Activated CD4-positive, alpha-beta T cell treated with anti-CD3 and anti-CD28 coated beads, Interleukin-2, amount 10 ng/mL, durations not matched to agents 24 days and 14 days (primary cell): ENCODE measurements at regions of chr1 and their contacts with region 1.

Region 1: GRCh38 chr1:108643492-108644335 is 17.2 kb downstream of the HENMT1 start:
- DNase-seq: peak; percentile 86
- H3K4me3 Mint-ChIP-seq: peak overlapping the region; percentile 6
- H3K27ac Mint-ChIP-seq: peak overlapping the region; percentile 69
- H3K4me1 Mint-ChIP-seq: peaks cover 62% of the 10 kb centered on the region
- H3K27me3 Mint-ChIP-seq: no peaks in the 10 kb centered on the region

Region 2: DNA sequence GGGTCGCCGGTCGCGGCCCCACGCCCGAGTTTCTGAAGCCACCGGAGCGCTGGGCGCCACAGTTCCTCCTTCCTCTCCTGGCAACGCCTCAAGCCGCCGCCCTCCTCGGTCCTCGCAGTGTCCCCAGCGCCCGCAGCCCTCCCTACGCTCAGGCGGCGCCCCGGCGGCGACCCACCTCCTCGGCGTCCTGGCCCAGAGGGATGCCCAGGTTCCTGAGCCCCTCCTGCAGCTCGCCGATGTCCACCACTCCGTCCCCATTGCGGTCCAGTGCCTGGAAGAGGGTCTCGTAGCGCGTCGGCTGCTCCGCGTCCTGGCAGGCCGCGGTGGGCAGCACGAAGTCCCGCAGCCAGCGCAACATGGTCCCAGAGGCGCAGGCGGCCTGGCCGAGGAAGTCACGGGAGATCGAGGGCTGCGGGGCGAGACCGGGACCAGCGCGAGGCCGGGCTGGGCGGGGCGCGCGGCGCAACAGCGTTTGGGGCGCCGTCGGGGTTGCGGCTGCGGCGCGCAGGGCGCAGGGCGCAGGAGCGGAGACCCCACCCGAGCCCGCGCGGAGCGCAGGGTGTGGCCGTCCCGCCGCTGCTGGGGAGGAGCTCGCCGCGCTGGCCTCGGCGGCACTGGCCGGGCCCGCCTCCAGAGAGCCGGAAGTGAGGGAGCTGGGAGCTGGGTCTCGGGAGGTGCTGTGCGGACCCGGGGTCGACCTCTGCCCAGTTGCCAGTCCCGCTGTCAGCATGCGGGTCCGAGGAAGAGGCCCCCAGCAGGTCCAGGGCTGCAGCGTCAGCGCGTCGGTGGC is 443.7 kb before region 1 on chr1 and contains the start of gene SLC25A24:
- intact Hi-C with region 1: loop called (anchors 5 kb)
- DNase-seq: peak; percentile 96
- H3K4me3 Mint-ChIP-seq: peak within 1 kb of the TSS; percentile 90
- H3K27ac Mint-ChIP-seq: peak within 1 kb of the TSS; percentile 83
- H3K4me1 Mint-ChIP-seq: peaks cover 27% of the 10 kb centered on the region
- H3K27me3 Mint-ChIP-seq: peaks cover 13% of the 10 kb centered on the region
- total RNA-seq, gene SLC25A24: 16.9 and 18.4 TPM in 2 replicates

Region 3: DNA sequence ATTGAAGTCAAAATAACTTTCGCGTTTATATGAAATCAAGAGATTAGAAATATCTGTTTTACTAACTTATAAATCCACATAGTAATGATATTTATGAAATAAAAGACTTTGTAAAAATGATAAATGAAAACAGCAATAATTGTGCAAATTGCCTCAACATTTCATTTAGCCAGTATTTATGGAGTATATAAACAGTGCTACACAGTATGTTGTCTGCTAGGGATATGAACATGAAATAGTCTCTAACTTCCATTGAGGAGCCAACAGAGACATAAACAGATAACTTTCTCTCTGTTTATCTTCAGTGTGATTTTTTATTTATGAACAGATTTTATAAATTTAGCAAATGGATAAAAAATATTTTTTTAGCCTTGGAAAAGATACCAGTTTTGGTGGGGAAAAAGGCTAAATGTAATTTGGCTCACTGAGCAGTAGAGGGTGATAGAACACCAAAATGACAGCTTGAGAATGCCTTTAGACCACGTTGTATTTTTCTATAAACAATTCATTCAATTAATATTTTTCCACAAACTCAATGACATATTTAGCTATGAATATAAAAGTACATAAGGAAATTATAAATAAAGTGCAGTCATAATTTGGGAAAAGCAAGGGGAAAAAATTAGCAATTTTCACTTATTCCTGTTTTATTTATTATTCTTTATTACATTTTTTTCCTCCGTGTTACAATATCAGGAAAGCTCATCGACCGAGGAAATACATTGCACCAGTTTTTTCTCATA is 131.3 kb before region 1 on chr1:
- intact Hi-C with region 1: loop called (anchors 1 kb)
- DNase-seq: no peak
- H3K4me3 Mint-ChIP-seq: no peak overlapping the region
- H3K27ac Mint-ChIP-seq: no peak overlapping the region
- H3K4me1 Mint-ChIP-seq: no peaks in the 10 kb centered on the region
- H3K27me3 Mint-ChIP-seq: peaks cover 55% of the 10 kb centered on the region

Region 4: GRCh38 chr1:108570128-108570527 is 73.6 kb before region 1 on chr1:
- intact Hi-C with region 1: loop called (anchors 2 kb)
- DNase-seq: peak; percentile 73
- H3K4me3 Mint-ChIP-seq: no peak overlapping the region
- H3K27ac Mint-ChIP-seq: no peak overlapping the region
- H3K4me1 Mint-ChIP-seq: no peaks in the 10 kb centered on the region
- H3K27me3 Mint-ChIP-seq: no peaks in the 10 kb centered on the region

Region 5: DNA sequence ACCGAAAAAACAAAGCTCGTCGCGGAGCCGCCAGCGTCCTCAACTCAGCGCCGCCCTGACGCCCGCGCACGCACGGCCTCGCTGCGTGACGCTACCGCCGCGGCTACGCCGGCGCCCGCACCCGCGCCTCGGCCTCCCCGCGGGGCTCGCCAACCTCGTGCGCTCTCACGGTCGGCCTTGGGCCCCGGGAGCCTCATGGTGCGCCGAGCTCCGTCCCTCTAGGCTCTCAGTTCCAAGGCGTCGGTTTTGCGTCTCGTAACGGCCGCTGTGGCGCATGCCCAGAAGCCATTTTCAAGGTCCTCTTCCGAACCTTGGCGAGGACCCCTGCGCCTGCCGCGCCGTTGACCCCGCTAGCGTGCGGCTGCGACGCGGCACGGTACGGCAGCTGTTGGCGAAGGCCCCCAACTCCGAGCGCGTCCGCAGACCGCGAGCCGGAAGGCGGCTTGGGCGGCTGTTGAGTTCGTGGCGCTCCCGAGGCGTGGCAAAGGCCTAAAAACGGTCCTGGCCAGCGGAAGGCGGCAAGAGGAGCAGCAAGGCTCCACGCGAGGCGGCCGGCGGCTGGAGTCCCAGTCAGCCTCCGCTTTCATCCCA is 17.4 kb after region 1 on chr1 and contains the start of gene HENMT1:
- intact Hi-C with region 1: loop called (anchors 1 kb)
- DNase-seq: peak; percentile 93
- H3K4me3 Mint-ChIP-seq: peak within 1 kb of the TSS; percentile 87
- H3K27ac Mint-ChIP-seq: peak within 1 kb of the TSS; percentile 97
- H3K4me1 Mint-ChIP-seq: peaks cover 34% of the 10 kb centered on the region
- H3K27me3 Mint-ChIP-seq: no peaks in the 10 kb centered on the region
- total RNA-seq, gene HENMT1: 17.5 and 17.7 TPM in 2 replicates

Region 6: DNA sequence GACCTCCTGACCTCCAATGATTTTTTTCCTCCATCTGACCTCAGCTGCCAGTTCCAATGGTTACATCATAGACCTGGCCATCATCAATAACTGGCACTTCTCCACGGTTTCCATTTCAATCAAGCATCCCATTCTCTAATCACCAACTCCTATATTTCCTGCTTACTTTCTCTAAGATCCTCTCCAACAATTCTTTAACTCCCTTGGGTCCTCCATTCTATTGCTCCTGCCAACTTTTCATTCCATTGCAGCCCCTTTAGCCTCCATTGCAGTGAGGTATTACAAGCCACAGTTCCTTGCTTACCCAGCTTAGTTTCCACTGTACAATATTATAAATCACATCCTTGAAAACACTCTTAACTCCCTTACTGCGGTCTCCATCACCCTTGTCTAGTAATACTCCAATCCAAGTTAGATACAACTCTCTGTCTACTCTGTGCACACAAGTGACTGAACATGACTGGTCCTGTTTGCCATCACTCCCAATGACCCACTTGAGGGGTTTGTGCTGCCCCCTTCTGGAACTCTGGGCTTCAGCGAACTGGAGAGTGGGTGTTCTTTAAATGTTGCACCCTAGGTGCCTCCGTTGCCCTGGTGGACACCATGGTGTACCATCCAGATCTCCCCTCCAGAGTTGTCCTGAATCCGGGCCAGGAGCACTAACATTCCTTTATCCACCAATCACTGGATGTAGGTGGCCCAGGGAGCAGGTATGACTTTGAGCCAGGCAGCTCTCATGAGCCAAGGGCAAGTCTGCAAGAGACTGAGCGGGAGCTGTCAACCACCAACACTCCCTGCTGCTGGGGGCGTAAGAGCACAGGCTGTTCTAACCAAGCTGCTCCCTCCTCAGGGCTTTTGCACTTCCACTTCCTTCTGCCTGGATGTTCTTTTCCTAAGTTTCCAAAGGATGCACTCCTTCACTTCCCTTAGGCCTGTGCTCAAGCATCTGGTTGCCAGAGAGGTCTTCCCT is 65.3 kb after region 1 on chr1:
- intact Hi-C with region 1: loop called (anchors 2 kb)
- DNase-seq: peak; percentile 87
- H3K4me3 Mint-ChIP-seq: no peak overlapping the region
- H3K27ac Mint-ChIP-seq: no peak overlapping the region
- H3K4me1 Mint-ChIP-seq: peaks cover 19% of the 10 kb centered on the region
- H3K27me3 Mint-ChIP-seq: peaks cover 16% of the 10 kb centered on the region